Activated naive CD4-positive, alpha-beta T cell treated with anti-CD3 and anti-CD28 coated beads, Interleukin-2, amount 10 ng/mL, durations not matched to agents 7 days and 5 days (primary cell): ENCODE measurements at regions of chr17 and their contacts with region 1.

Region 1: GRCh38 chr17:3647769-3648555 is 11.4 kb downstream of the CTNS start:
- DNase-seq: peak; percentile 73
- H3K4me3 Mint-ChIP-seq: no peak overlapping the region
- H3K27ac Mint-ChIP-seq: peak overlapping the region; percentile 52
- H3K4me1 Mint-ChIP-seq: peaks cover 5% of the 10 kb centered on the region
- H3K27me3 Mint-ChIP-seq: no peaks in the 10 kb centered on the region

Region 2: DNA sequence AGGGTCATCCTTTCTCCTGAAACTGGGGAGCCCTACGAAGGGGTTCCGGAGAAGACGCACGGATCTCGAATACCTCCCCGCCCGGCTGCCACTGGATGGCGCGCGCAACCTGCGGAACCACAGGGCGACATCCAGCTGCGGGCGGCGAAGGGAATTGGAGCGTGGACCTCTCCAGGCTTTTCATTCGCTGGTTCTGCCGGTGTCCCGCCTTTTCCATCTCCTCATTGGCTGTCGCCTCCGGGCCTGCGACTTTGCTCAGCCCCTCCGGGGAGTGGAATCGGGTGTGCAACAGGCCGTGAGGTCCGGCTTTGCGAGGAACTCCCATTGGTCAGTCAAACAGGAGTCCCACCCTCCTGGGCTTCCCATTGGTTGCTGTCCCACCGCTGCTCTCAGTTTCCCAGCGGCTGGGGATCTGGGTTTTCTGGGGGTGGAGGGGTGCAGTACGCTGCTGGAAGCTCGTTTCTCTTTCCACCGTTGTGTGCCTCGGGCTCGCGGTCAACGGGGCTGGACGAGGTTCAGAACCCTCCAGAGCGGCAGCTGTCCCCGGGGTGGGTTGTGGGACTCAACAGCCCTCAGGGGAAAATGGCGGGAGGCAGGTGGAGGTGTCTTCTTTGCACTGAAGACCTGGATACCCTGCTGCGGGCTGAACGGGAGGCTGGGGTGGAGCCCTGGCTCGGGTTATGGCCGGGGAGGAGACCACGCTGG is 599.0 kb before region 1 on chr17:
- CTCF ChIA-PET with region 1: interaction called, 24 read pairs
- DNase-seq: peak; percentile 97
- H3K4me3 Mint-ChIP-seq: peak overlapping the region; percentile 87
- H3K27ac Mint-ChIP-seq: peak overlapping the region; percentile 85
- H3K4me1 Mint-ChIP-seq: peaks cover 9% of the 10 kb centered on the region
- H3K27me3 Mint-ChIP-seq: peaks cover 7% of the 10 kb centered on the region

Region 3: DNA sequence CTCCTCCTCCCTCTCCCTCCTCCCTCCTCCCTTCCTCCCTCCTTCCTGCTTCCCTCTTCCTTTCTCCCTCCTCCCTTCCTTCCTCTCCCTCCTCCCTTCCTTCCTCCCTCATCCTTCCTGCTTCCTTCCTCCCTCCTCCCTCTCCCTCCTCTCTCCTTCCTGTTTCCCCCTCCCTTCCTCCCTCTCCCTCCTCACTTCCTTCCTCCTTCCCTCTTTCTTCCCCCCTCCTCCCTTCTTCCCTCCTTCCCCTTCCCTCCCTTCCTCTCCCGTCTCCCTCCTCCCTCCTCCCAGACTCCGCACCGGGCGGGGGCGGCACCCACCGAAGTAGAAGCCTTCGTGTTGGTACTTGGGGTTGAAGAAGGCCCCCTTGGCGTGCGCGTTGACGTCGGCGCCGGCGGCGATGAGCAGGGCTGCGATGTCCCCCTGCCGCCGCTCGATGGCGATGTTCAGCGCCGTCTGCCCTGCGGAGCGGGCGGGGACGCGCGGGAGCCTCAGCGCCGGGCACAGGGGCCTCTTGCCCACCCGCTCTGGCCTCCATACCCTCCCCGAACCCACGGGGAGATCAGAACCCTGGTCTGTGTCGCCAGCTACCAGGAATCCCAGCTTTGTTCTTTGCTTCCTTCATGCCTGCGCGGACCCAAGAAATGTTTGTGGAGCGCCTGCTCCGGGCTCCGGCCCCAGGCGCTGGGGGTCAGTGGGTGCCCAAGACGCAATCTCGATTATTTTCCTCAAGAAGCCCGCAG is 112.5 kb before region 1 on chr17:
- CTCF ChIA-PET with region 1: interaction called, 13 read pairs
- DNase-seq: peak; percentile 51
- H3K4me3 Mint-ChIP-seq: no peak overlapping the region
- H3K27ac Mint-ChIP-seq: no peak overlapping the region
- H3K4me1 Mint-ChIP-seq: peaks cover 10% of the 10 kb centered on the region
- H3K27me3 Mint-ChIP-seq: peaks cover 25% of the 10 kb centered on the region

Region 4: GRCh38 chr17:3602499-3602898 is 45.5 kb before region 1 on chr17:
- CTCF ChIA-PET with region 1: interaction called, 40 read pairs
- DNase-seq: peak; percentile 46
- H3K4me3 Mint-ChIP-seq: no peak overlapping the region
- H3K27ac Mint-ChIP-seq: no peak overlapping the region
- H3K4me1 Mint-ChIP-seq: no peaks in the 10 kb centered on the region
- H3K27me3 Mint-ChIP-seq: no peaks in the 10 kb centered on the region

Region 5: DNA sequence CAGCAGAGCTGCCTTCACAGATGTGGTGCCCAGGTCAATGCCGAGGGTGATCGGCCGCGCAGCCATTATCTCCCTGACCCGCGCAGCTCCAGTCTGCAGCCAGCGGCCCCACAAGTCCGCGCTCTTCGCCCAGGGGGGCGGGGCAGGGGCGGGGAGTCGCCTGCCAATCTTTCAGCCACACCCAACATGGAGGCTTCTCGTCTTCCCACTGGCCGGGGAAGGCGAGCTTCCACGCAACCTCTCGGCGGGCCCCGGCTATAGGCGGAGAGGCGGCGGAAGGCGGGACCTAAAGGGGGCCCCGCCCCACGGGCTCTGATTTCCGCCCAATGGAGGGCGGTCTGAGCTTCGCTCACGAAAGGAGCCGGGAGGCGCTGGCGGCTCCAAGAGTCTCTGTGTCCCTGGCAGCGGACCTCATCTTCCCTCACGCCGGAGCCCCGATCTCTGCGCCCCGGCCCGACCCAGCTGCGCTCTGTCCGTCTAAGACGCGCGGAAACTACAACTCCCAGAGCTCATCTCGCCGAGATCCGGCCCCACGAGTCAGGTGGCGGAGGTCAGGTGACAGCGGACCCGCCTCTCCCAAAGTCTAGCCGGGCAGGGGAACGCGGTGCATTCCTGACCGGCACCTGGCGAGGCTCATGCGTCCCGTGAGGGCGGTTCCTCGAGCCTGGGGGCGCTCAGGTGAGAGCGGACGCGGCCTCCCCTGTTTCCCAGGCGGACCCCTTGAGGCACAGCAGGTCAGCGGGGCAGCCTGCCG is 11.6 kb before region 1 on chr17 and contains the starts of genes CTNS and SHPK:
- CTCF ChIA-PET with region 1: interaction called, 14 read pairs
- DNase-seq: peak; percentile 97
- H3K4me3 Mint-ChIP-seq: peak within 1 kb of the TSS; percentile 91
- H3K27ac Mint-ChIP-seq: peak within 1 kb of the TSS; percentile 95
- H3K4me1 Mint-ChIP-seq: peaks cover 51% of the 10 kb centered on the region
- H3K27me3 Mint-ChIP-seq: no peaks in the 10 kb centered on the region